PC-9 (cell line): ENCODE measurements at regions of chr12 and their contacts with region 1.

Region 1: GRCh38 chr12:581746-582145 is 81.5 kb downstream of the NINJ2 start:
- DNase-seq: no peak
- H3K4me3 ChIP-seq: no peak overlapping the region
- H3K27ac ChIP-seq: no peak overlapping the region
- H3K4me1 ChIP-seq: peaks cover 7% of the 10 kb centered on the region
- H3K27me3 ChIP-seq: no peaks in the 10 kb centered on the region
- CTCF ChIP-seq: no peak

Region 2: GRCh38 chr12:565589-566116 is 16.1 kb before region 1 on chr12:
- CTCF ChIA-PET with region 1: no interaction called
- POLR2A ChIA-PET with region 1: no interaction called
- intact Hi-C with region 1: no loop called
- DNase-seq: no peak
- H3K4me3 ChIP-seq: no peak overlapping the region
- H3K27ac ChIP-seq: no peak overlapping the region
- H3K4me1 ChIP-seq: peaks cover 6% of the 10 kb centered on the region
- H3K27me3 ChIP-seq: peaks cover 4% of the 10 kb centered on the region; the same call in 1 of the 2 replicates
- CTCF ChIP-seq: no peak

Region 3: GRCh38 chr12:614411-614970 is 32.7 kb after region 1 on chr12:
- CTCF ChIA-PET with region 1: interaction called, 15 read pairs
- POLR2A ChIA-PET with region 1: no interaction called
- intact Hi-C with region 1: no loop called
- DNase-seq: peak in 1 of 2 experiments; percentile 33
- H3K4me3 ChIP-seq: no peak overlapping the region
- H3K27ac ChIP-seq: no peak overlapping the region
- H3K4me1 ChIP-seq: peaks cover 27% of the 10 kb centered on the region
- H3K27me3 ChIP-seq: no peaks in the 10 kb centered on the region
- CTCF ChIP-seq: no peak